Sciatic nerve (tissue), 2 donors: ENCODE measurements at regions of chr5 and their contacts with region 1.

Region 1: DNA sequence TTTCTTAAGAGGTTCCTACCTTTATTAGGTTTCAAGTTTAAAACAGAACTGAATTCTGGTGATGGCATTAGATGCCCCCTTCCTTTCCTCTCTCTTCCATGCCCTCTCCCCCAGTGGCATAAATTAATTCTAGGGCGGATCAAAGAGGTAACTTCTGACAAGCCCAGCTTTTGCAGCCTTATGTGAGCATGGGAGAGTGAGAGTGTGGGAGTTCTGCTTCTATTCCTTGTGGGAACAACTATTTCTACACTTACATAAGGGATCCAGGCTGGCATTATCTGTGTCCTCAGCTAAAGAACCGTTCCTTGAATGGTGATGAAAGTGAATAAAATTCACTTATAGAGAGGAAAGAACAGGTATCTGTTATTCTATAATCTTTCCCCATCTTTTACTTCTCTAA is 437.6 kb downstream of the KIF4B start:
- DNase-seq: no peak
- ATAC-seq: no peak

Region 2: GRCh38 chr5:153632748-153633290 is 1818.3 kb before region 1 on chr5:
- intact Hi-C with region 1: loop called (anchors 5 kb)
- DNase-seq: no peak
- ATAC-seq: no peak

Region 3: GRCh38 chr5:154811653-154812365 is 639.3 kb before region 1 on chr5:
- intact Hi-C with region 1: no loop called
- DNase-seq: peak; percentile 76
- ATAC-seq: peak; percentile 72

Region 4: DNA sequence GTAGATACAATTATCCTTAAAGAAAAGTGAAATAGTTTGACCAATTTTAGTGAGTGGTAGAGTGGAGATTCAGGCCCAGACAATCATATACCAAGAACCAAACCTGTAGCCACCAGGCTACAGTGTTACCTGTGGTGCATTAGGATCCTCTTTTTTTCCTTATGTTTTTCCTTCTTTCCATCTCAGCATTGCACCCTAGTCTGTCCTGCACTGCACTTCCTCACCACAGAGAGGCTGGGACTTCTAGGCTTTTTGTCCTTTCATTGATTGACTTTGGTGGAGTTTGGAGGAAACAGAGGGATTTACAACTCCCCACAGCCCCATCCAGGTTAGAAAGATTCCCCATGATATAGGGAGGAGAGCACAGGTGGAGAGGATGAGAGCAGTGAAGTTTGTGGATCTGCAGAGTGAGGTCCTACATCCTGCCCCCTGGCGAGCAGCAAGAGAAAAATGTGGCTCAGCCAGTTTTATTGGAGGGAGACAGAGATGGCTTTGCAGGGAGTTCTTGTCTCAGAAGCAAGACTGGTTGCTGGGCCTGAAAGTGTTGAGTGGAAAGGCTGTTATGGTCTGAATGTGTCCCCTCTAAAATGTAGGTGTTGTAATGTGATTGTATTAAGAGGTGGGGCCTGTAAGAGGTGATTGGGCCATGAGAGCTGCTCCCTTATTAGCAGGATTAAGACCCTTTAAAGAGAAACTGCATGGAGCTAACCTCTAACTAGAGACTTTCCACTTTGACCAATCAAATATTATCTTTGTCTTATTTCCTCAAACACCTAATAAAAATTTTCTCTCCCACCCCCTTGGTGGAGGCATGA is 401.3 kb before region 1 on chr5:
- intact Hi-C with region 1: no loop called
- DNase-seq: no peak
- ATAC-seq: no peak

Region 5: DNA sequence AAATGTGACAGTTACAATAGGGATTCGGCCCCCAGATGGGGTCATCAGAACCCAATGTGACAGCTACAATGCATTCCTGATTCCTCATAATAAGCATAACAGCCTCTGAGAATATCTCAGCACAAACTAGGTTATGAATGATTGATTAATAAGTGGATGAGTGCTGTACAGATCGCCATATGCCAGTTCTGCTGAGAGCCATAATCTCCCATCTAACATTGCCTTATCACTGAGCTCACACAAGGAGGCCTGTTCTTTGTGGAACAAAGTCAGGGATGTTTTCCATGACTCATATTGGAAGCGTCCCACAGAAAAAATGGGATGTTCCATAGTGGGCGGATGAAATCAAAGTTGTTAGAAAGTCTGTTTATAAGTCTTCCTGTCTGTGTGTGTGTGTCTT is 348.0 kb before region 1 on chr5:
- intact Hi-C with region 1: no loop called
- DNase-seq: no peak
- ATAC-seq: no peak